Heart left ventricle (tissue), 16 donors: ENCODE measurements at regions of chr11 and their contacts with region 1.

Region 1: DNA sequence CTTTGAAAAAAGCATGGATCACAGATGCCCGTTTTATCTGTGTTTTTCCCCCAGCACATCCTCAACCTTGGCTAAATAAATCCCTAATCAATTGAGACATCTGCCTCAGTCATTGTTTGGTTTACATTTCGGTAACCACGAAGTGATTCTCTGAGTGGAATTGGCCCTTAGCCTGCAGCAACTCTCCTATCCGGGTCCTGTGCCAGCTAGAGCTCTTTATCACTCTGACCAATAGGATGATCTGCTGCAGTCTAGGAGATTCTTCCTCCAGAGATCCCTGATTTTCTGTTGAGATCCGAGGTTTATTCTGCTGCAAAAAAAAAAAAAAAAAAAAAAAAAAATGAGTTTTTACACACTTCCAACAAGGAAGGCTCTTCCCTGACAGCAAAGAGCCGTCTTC is 137.3 kb downstream of the KCNA4 start:
- DNase-seq: peak in 3 of 5 donors; percentile 21 to 29 (median 25)
- ATAC-seq: peak; percentile 37 to 72 (median 60)
- H3K4me3 ChIP-seq: peak overlapping the region in 1 of 12 donors; percentile 23
- H3K27ac ChIP-seq: no peak overlapping the region
- H3K4me1 ChIP-seq: no peaks in the 10 kb centered on the region
- H3K27me3 ChIP-seq: no peaks in the 10 kb centered on the region
- CTCF ChIP-seq: no peak
- POLR2A ChIP-seq: no peak

Region 2: GRCh38 chr11:29293825-29294224 is 585.7 kb before region 1 on chr11:
- intact Hi-C with region 1: no loop called
- DNase-seq: no peak
- ATAC-seq: no peak
- H3K4me3 ChIP-seq: no peak overlapping the region
- H3K27ac ChIP-seq: no peak overlapping the region
- H3K4me1 ChIP-seq: no peaks in the 10 kb centered on the region
- H3K27me3 ChIP-seq: no peaks in the 10 kb centered on the region
- CTCF ChIP-seq: no peak
- POLR2A ChIP-seq: no peak

Region 3: GRCh38 chr11:30879322-30880005 is 999.9 kb after region 1 on chr11:
- intact Hi-C with region 1: loop called in 1 of 10 experiments (anchors 10 kb)
- DNase-seq: peak in 4 of 5 donors; percentile 37 to 75 (median 50)
- ATAC-seq: peak; percentile 81 to 94 (median 86)
- H3K4me3 ChIP-seq: peak overlapping the region in 1 of 12 donors; percentile 13
- H3K27ac ChIP-seq: peak overlapping the region in 8 of 12 donors; percentile 31 to 70 (median 63)
- H3K4me1 ChIP-seq: peaks cover 0 to 47% (median 25%) of the 10 kb centered on the region in 12 donors
- H3K27me3 ChIP-seq: no peaks in the 10 kb centered on the region
- CTCF ChIP-seq: no peak
- POLR2A ChIP-seq: no peak